Right cardiac atrium (tissue), 5 donors: ENCODE measurements at regions of chr17 and their contacts with region 1.

Region 1: DNA sequence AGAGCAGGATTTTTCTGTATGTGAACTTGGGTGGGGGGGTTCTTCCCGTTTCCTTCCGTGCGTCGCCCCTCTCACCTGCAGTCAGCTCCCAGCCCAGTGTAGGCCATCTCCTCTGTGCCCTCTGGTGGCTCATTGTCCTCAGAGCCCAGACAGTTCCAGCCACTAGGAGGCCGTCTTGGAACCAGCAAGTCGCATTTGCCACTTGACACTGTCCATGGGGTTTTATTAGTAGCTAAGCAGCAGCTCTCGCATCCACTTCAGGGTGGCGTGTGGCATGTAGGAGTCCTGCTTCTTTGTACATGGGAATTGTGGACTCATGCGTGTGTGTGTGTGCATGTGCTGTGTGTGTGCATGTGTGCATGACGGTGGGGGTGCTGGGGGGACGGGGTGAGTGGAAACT is 74.0 kb downstream of the SEC14L1 start:
- DNase-seq: peak in 1 of 3 donors; percentile 67
- ATAC-seq: peak; percentile 54 to 63
- H3K4me3 ChIP-seq: no peak overlapping the region
- H3K27ac ChIP-seq: no peak overlapping the region
- H3K4me1 ChIP-seq: no peaks in the 10 kb centered on the region
- H3K27me3 ChIP-seq: no peaks in the 10 kb centered on the region

Region 2: DNA sequence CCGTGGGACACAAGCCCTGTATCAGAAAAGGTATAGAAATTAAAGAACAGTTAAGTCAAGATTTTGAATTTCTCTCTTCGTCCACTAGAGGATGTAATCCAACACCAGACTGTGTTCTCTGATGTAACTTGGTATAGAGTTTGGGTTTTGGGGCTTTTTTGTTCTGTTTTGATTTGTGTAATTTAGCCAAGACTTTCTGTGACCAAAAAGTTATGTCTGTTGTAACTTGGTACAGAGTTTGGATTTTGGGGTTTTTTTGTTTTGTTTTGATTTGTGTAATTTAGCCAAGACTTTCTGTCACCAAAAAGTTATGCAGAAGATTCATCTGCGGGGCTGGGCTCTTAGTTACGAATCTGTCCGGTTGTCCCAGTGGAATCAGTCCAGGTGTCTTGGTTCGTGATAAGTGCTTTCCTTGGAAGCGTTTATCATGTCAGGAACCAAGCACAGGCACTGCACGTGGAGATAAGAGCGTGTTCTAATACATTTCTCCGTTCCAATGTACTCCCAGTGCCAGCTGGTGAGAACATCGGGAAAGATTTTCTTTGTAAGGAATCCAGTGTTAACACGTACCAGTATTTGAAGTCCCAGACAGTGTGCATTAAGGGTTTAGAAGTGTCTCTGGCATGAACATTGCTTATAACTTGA is 118.1 kb before region 1 on chr17:
- intact Hi-C with region 1: loop called in 2 of 4 experiments (anchors 10 kb)
- DNase-seq: peak in 2 of 3 donors; percentile 32 to 72
- ATAC-seq: peak; percentile 81 to 82
- H3K4me3 ChIP-seq: no peak overlapping the region
- H3K27ac ChIP-seq: peak overlapping the region; percentile 77
- H3K4me1 ChIP-seq: peaks cover 12% of the 10 kb centered on the region
- H3K27me3 ChIP-seq: no peaks in the 10 kb centered on the region

Region 3: DNA sequence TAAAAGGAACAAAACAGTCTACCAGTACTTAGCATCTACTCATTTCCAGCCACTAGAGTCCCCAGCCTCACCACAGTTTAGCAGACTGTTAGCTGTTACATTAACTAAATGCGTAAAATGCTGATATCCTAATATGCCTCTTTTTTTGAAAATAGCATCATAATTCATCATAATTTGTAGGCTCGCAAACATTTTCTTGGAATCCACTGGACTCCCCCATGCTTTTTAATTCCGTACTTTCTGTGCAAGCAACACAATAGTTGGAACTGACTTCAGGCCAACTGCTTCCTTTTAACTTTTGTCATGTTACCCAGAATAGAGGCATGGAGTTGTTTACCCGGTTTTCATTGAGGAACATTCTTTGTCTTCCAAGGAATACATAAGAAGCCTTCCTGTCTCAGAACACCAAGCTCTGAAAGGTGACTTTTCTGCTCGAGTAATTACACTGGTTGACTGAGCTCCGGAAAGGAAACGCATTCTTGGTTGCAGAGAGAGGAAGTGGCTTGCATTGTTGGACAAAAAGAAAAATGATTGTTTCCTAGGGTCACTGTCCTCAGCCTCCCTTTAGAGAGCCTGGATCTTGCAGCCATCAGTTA is 104.9 kb before region 1 on chr17:
- intact Hi-C with region 1: loop called in 1 of 4 experiments (anchors 10 kb)
- DNase-seq: no peak
- ATAC-seq: peak; percentile 88 to 93
- H3K4me3 ChIP-seq: no peak overlapping the region
- H3K27ac ChIP-seq: peak overlapping the region; percentile 97
- H3K4me1 ChIP-seq: peaks cover 13% of the 10 kb centered on the region
- H3K27me3 ChIP-seq: no peaks in the 10 kb centered on the region

Region 4: DNA sequence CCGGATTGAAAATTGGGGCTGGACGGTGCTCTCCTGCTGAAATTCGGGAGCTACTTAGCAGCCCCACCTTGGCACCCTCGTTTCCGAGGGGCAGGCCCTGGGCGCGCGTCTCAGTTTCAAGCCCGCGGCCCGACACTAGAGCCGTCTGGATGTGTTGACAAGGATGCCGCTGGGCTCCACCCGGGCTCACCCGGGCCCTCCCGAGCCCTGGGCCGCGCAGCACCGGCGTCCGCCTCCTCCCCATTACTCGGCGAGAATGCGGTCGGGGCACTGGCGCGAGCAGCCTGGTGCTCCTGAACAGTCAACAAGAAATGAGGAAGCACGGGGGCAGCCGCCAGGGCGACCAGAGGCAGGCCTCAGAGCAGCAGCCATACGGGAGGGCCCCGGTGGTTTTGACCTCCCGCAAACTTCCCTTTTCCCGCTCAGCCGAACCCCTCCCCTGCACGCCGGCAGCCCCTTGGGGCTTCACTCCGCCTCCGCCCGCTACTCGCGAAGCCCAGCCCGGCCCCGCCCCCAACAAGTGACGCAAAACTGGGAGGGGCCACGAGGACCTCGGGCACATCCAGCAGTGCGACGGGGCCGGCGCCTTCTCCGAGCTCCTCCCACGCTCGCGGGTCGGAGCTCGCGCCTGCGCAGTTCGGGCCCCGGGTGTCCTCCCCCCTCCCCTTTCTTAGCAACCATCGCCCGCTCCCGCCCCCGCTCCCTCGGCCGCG is 74.4 kb before region 1 on chr17:
- intact Hi-C with region 1: loop called in 2 of 4 experiments (anchors 5 to 10 kb)
- DNase-seq: peak; percentile 99 to 100 (median 100)
- ATAC-seq: peak; percentile 98 to 99
- H3K4me3 ChIP-seq: peak overlapping the region; percentile 95
- H3K27ac ChIP-seq: peak overlapping the region; percentile 90
- H3K4me1 ChIP-seq: no peaks in the 10 kb centered on the region
- H3K27me3 ChIP-seq: no peaks in the 10 kb centered on the region

Region 5: DNA sequence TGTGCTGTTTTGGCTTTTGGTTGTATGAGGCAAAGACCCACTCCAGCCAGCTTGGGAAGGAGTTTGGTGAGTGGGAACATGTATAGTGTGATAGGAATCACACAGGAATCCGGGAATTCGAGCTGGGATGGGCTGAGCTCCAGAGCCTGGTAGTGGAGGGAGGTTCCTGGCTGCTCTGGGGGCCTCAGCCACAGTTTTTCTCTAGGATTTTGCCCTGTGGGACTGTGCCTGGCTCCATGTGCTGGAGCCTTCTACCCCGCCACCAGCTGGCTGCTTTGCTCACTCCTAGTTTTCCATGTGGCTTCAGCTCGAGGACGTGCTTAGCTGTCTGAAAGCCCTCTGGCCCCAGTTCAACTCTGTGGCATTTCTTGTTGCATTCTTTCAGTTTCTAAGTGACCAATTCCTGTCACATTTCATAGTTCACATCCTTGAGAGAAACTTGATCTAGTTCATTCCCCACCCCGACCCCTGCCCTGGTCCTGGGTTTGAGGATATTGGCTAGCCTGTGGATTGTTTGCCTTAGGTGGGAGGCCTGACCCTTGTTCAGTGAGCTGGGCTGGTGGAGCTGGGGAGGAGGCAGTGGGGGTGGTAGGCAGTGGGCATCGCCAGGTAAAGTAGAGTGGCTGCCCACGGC is 69.0 kb before region 1 on chr17:
- intact Hi-C with region 1: loop called in 2 of 4 experiments (anchors 5 to 10 kb)
- DNase-seq: peak; percentile 80 to 86 (median 83)
- ATAC-seq: peak; percentile 74
- H3K4me3 ChIP-seq: peak overlapping the region; percentile 9
- H3K27ac ChIP-seq: peak overlapping the region; percentile 94
- H3K4me1 ChIP-seq: peaks cover 19% of the 10 kb centered on the region
- H3K27me3 ChIP-seq: no peaks in the 10 kb centered on the region

Region 6: DNA sequence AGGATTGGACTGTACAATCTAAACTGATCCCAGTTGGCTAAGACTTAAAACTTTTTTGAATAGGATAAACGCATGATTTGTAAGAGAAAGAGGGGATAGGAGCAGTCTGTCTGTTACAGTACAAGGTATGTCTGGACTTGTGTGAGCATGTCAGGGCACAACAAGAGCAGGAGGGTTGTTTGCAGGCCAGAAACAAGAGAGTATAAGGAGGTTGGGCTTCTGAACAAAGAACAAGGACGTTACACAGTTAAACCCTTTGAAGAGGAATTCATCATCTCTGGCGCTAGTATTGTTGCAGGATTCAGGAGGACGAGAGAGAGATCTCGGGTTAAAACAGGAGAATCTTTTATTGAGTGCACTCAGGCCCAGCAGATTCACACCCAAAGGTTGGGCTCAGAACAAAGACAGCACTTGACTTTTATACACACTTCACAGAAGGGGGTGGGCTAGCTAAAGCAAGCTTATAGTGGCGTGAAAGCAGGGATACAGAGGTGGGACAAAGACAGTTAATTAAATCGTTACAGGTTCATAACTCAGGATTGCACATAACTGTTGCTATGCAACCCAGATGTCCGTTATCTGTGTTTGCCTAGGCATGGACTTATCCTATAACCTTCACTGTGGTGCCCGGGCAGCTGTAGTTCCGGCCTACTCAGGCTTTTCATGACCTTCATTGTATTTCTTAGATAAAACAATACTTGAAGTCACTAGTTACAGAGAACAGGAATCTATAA is 39.6 kb before region 1 on chr17:
- intact Hi-C with region 1: no loop called
- DNase-seq: no peak
- ATAC-seq: no peak
- H3K4me3 ChIP-seq: no peak overlapping the region
- H3K27ac ChIP-seq: peak overlapping the region; percentile 26
- H3K4me1 ChIP-seq: peaks cover 2% of the 10 kb centered on the region
- H3K27me3 ChIP-seq: no peaks in the 10 kb centered on the region